ENCODE measurements at regions of chr20 and their contacts with region 1.

Region 1: GRCh38 chr20:41487872-41488271 is 121.3 kb upstream of the EMILIN3 start:
- DNase-seq: no peak
- ATAC-seq: no peak
- H3K4me3 ChIP-seq: no peak overlapping the region
- H3K27ac ChIP-seq: no peak overlapping the region
- H3K4me1 ChIP-seq: no peaks in the 10 kb centered on the region
- H3K27me3 ChIP-seq: no peaks in the 10 kb centered on the region
- CTCF ChIP-seq: no peak

Region 2: GRCh38 chr20:40245829-40246228 is 1242.0 kb before region 1 on chr20:
- intact Hi-C with region 1: loop called in 1 of 10 experiments (anchors 5 kb)
- DNase-seq: no peak
- ATAC-seq: no peak
- H3K4me3 ChIP-seq: no peak overlapping the region
- H3K27ac ChIP-seq: no peak overlapping the region
- H3K4me1 ChIP-seq: no peaks in the 10 kb centered on the region
- H3K27me3 ChIP-seq: peaks cover 0 to 28% (median 2%) of the 10 kb centered on the region in 7 donors
- CTCF ChIP-seq: no peak

Measured in heart right ventricle (tissue), 16 donors.